WTC11 (cell line): ENCODE measurements at regions of chr1 and their contacts with region 1.

Region 1: DNA sequence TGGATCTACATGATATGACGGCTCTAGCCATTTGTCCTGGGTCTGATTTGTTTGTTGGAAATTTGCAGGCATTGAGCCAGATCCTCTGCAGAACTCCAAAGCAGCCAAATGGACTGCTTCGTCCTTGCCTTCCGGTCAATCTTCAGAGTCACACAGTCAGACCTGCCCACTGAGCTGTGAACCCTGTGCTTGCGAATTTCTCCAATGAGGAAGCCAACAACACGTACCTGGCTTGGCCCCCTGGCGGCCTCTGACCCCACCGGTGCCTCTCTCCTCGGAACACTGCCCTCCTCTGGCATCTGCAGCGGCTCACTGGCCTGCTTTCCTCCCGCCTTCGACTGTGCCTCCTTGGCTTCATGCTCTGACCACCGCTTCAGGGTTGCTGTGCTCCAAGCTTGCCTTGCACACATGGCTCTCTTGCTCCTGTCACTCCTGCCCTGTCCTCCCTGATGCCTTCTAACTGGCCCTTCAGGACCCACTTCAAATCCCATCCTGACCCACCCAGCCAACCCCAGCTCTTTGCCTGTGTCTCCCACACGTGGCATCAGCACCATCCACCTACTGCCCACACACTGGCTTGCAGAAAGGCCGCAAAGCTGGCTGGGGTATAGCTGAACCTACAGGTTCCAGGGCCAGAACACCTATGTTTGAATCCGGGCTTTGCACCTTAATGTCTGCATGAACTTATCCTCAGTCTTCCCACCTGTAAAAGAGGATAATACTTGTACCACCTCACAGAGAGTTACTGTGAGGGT is 128.2 kb downstream of the KCNN3 start:
- DNase-seq: peak; percentile 83
- ATAC-seq: peak; percentile 98
- H3K4me3 Mint-ChIP-seq: no peak overlapping the region
- H3K27ac Mint-ChIP-seq: no peak overlapping the region
- H3K4me1 Mint-ChIP-seq: peaks cover 39% of the 10 kb centered on the region
- H3K27me3 Mint-ChIP-seq: no peaks in the 10 kb centered on the region
- CTCF ChIP-seq: peak; percentile 39

Region 2: GRCh38 chr1:154558575-154559465 is 183.1 kb before region 1 on chr1 and contains the start of gene UBE2Q1:
- CTCF ChIA-PET with region 1: interaction called, 26 read pairs
- POLR2A ChIA-PET with region 1: no interaction called
- DNase-seq: peak; percentile 95
- ATAC-seq: peak; percentile 70
- H3K4me3 Mint-ChIP-seq: peak within 1 kb of the TSS; percentile 94
- H3K27ac Mint-ChIP-seq: peak within 1 kb of the TSS; percentile 89
- H3K4me1 Mint-ChIP-seq: peaks cover 28% of the 10 kb centered on the region
- H3K27me3 Mint-ChIP-seq: no peaks in the 10 kb centered on the region
- CTCF ChIP-seq: no peak
- total RNA-seq, gene UBE2Q1: 60.8 to 62.7 TPM (median 61.6 TPM) in 3 replicates

Region 3: GRCh38 chr1:154669464-154670282 is 72.2 kb before region 1 on chr1:
- CTCF ChIA-PET with region 1: interaction called, 32 read pairs
- POLR2A ChIA-PET with region 1: no interaction called
- DNase-seq: peak; percentile 80
- ATAC-seq: peak; percentile 100
- H3K4me3 Mint-ChIP-seq: no peak overlapping the region
- H3K27ac Mint-ChIP-seq: no peak overlapping the region
- H3K4me1 Mint-ChIP-seq: peaks cover 26% of the 10 kb centered on the region
- H3K27me3 Mint-ChIP-seq: peaks cover 2% of the 10 kb centered on the region; the same call in 1 of the 2 replicates
- CTCF ChIP-seq: no peak

Region 4: DNA sequence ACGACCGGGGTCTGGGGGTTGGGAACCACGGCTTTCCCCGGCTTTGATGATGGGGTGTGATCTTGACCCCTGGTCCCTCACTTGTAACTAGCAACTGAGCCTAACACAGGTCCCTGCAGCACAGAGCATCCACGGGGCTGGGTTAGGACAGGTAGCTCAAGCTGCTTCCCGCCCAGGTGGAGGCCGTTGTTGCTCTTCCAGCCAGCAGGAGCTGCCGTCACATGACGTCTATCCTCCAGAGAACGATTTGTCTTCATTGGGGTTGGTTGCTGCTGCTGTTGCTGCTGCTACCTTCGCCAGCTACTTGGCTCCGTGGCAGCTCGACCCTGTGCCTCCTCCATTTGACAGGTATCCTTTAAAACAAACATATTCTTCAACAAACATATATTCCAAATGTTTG is 59.7 kb before region 1 on chr1:
- CTCF ChIA-PET with region 1: interaction called, 15 read pairs
- POLR2A ChIA-PET with region 1: no interaction called
- DNase-seq: no peak
- ATAC-seq: 0 out of 2 replicates have a peak, but pooled peaks have one; percentile 41
- H3K4me3 Mint-ChIP-seq: no peak overlapping the region
- H3K27ac Mint-ChIP-seq: no peak overlapping the region
- H3K4me1 Mint-ChIP-seq: peaks cover 7% of the 10 kb centered on the region
- H3K27me3 Mint-ChIP-seq: no peaks in the 10 kb centered on the region; the same call in 1 of the 2 replicates
- CTCF ChIP-seq: no peak

Region 5: DNA sequence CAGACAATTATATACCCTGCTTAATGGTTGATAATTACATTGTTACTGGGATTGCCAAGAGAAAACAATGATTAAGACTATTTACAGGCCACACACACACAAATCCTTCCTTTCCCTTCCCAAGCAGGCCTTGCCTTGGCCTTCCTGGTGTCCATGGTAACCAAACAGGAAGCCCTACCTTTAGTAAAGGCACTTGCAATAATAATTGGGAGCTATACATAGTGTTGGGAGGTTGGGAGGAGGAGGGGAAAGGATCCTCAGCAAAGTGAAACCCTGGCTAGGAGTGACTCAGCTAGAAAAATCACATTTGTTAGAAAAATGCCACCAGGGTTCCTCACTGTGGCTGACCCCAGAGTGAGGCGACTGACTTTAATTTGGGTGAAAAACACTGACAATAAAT is 11.7 kb before region 1 on chr1:
- CTCF ChIA-PET with region 1: interaction called, 34 read pairs
- POLR2A ChIA-PET with region 1: no interaction called
- DNase-seq: no peak
- ATAC-seq: peak; percentile 72
- H3K4me3 Mint-ChIP-seq: no peak overlapping the region
- H3K27ac Mint-ChIP-seq: peak overlapping the region; percentile 60; the same call in 1 of the 2 replicates
- H3K4me1 Mint-ChIP-seq: peaks cover 42% of the 10 kb centered on the region
- H3K27me3 Mint-ChIP-seq: no peaks in the 10 kb centered on the region; the same call in 1 of the 2 replicates
- CTCF ChIP-seq: no peak

Region 6: DNA sequence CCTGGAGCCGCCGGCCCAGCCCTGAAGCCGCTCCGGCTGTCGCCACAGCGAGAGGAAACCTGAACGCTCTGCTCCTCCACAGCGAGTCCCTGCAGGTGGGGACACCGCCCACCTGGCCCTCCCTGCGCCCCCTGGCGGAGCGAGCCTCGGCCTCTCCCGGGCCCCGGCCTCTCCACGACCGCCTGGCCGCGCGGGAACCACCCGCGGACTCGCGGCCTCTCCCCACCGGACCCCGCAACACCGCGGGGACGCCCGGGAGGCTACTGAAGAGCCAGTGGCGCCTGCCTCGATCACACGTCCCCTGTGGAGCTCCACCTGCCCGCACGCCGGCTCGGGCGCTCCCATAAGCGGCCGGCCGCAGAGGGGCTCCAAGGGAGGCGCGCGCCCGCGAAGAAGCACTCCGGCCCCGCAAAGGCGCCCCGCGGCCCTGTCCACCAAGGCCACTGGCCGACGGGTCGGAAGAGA is 18.6 kb after region 1 on chr1:
- CTCF ChIA-PET with region 1: interaction called, 12 read pairs
- POLR2A ChIA-PET with region 1: no interaction called
- DNase-seq: peak; percentile 87
- ATAC-seq: peak; percentile 96
- H3K4me3 Mint-ChIP-seq: peak overlapping the region; percentile 48
- H3K27ac Mint-ChIP-seq: no peak overlapping the region
- H3K4me1 Mint-ChIP-seq: no peaks in the 10 kb centered on the region
- H3K27me3 Mint-ChIP-seq: peaks cover 24% of the 10 kb centered on the region
- CTCF ChIP-seq: peak; percentile 66